ENCODE measurements at regions of chr19 and their contacts with region 1.

Region 1: DNA sequence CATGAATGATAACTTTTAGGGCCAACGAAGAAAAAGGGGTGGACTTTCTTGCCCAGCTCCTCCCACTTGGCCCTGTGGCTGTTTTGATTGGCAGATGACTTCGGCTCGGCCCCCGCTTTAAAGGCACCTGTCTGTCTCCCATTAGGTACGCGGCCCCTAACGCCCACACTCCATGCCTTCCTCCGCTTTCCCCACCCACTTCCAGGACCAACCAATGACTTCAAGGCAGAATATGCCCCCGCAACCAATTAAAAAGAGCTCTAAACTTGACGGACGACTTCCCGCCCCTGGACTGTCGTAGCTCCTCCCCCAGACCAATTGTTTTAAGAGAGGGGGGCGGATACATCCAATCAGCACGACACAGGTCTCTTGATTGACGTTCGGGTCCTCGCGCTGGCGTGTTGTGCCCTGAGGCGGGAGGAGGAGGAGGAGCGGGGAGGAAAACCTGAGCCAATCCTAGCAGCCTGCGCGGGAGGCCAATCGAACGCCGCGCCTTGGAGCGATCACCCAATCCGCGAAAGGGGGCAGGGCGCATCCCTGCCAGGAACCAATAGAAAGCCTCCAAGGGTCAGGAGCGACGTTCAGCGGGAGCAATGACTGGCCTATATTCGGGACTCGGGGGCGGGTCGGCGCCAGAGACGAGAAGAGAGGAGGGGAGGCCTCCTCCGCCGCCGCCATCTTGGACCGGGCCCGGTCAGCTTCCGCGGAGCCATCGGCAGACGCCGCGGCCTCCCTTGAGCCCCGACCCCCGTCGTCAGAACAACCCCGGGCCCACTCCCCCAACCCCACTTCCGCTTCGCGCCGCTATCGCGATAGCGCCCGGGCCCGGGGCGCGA is at the start of gene CNOT3:
- DNase-seq: peak; percentile 100
- H3K4me3 ChIP-seq: peak within 1 kb of the TSS; percentile 96
- H3K27ac ChIP-seq: peak within 1 kb of the TSS; percentile 54
- H3K4me1 ChIP-seq: peaks cover 21% of the 10 kb centered on the region
- CTCF ChIP-seq: no peak
- total RNA-seq, gene CNOT3: 15.2 and 18.4 TPM in 2 replicates

Region 2: DNA sequence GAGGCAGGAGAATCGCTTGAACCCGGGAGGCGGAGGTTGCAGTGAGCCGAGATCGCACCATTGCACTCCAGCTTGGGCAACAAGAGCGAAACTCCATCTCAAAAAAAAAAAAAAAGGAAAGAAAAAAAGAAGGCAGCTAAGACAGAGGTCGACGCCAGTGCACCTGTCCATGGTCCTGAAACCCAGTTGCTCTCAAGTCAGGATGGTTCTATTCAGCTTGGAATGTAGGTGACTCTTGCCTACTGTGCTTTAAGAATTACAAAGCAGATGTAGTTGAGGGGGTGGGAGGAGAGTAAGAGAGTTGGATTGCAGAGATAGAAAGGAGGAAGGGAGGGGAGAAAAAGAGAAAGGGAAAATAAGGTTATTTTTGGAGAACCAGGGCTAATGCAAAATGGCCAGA is 209.6 kb before region 1 on chr19:
- CTCF ChIA-PET with region 1: no interaction called
- POLR2A ChIA-PET with region 1: no interaction called
- intact Hi-C with region 1: no loop called
- DNase-seq: peak; percentile 29
- H3K4me3 ChIP-seq: no peak overlapping the region
- H3K27ac ChIP-seq: no peak overlapping the region
- H3K4me1 ChIP-seq: no peaks in the 10 kb centered on the region
- CTCF ChIP-seq: no peak

Region 3: DNA sequence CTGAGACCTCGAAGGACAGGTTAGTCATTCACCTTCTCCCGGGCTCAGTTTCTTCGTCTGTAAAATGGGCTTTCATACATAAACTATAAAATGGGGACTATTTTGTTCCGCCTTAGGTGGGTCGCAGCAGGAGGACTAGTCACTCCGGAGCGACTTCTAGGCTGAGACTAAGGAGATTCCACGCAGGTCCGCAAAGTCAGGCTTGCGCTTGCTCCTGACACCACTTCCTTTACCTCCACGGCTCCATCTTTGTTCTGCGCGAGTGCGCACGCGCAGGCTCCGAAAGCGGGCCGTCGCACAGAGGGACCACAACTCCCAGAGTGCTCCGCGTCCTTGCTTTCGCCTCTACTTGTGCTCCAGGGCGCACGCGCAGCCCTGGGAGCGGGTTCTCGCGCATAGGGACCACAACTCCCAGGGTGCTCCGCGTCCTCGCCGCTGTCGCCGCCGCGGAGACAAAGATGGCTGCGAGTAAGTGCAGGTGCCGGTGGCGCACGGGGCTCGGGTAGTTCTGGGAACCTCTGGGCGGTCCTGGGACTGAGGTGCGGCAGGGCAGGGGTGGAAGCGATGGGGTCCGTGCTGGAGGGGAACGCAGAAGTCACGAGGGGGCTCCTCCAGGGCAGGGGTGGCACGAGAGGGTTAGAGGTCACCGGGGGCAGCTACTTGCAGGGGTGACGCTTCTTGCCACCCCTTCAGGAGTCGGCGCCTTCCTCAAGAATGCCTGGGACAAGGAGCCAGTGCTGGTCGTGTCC is 34.7 kb before region 1 on chr19 and contains the start of gene NDUFA3:
- CTCF ChIA-PET with region 1: no interaction called
- POLR2A ChIA-PET with region 1: interaction called, 3 read pairs
- intact Hi-C with region 1: loop called (anchors 1 kb)
- DNase-seq: peak; percentile 99
- H3K4me3 ChIP-seq: peak within 1 kb of the TSS; percentile 94
- H3K27ac ChIP-seq: peak within 1 kb of the TSS; percentile 24
- H3K4me1 ChIP-seq: peaks cover 11% of the 10 kb centered on the region
- CTCF ChIP-seq: no peak
- total RNA-seq, gene NDUFA3: 32.0 and 92.4 TPM in 2 replicates

Region 4: DNA sequence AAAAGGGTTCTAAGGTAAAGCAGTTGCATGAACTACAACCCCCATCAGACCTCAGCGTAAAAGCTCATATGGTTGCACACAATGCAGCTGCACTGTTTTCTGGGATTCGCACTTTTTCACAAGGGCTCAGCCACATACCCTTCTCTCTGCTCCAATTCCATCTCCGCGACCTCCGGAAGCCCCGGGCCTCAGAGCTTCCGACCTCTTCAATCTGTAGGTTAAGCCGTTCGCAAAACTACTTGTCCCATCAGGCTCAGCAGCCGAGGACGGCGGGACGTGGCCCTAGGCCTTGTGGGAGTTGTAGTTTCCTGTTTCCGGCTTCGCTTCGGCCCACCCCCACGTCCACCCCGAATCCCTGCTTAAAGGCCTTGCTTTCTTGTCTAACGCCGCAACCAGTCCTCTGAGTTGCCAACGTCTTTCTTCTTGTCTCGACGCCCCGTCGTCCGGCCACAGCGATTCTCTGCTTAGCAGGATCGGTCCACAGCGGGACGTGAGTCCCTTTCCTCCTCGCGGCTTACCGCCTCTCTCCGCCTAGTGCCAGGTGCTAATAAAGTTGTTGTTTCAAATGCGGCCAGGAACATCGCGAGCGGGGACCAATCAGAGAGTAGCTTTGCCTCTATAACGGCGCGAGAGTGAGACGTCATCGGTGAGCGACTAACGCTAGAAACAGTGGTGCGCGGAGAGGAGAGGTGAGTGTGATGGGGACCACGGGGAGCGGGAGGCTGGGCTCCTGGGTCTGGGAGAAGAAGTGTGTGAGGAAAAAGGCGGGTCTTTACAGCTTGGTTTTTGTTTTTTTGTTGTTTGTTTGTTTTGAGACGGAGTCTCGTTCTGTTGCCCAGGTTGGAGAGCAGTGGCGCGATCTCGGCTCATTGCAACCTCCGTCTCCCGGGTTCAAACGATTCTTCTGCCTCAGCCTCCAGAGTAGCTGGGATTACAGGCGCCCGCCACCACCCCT is 21.9 kb before region 1 on chr19 and contains the starts of genes PRPF31 and TFPT:
- CTCF ChIA-PET with region 1: interaction called, 6 read pairs
- POLR2A ChIA-PET with region 1: interaction called, 7 read pairs
- intact Hi-C with region 1: loop called (anchors 1 kb)
- DNase-seq: peak; percentile 99
- H3K4me3 ChIP-seq: peak within 1 kb of the TSS; percentile 92
- H3K27ac ChIP-seq: peak within 1 kb of the TSS; percentile 66
- H3K4me1 ChIP-seq: peaks cover 16% of the 10 kb centered on the region
- CTCF ChIP-seq: no peak
- total RNA-seq, gene PRPF31: 50.9 and 53.0 TPM in 2 replicates
- total RNA-seq, gene TFPT: 17.2 and 30.1 TPM in 2 replicates

Region 5: GRCh38 chr19:54159352-54160181 is 22.3 kb after region 1 on chr19 and contains the start of gene LENG1:
- CTCF ChIA-PET with region 1: no interaction called
- POLR2A ChIA-PET with region 1: interaction called, 9 read pairs
- intact Hi-C with region 1: loop called (anchors 2 kb)
- DNase-seq: peak; percentile 100
- H3K4me3 ChIP-seq: peak within 1 kb of the TSS; percentile 81
- H3K27ac ChIP-seq: peak within 1 kb of the TSS; percentile 82
- H3K4me1 ChIP-seq: peaks cover 26% of the 10 kb centered on the region
- CTCF ChIP-seq: peak; percentile 64
- total RNA-seq, gene LENG1: 8.0 TPM in 2 replicates

Region 6: DNA sequence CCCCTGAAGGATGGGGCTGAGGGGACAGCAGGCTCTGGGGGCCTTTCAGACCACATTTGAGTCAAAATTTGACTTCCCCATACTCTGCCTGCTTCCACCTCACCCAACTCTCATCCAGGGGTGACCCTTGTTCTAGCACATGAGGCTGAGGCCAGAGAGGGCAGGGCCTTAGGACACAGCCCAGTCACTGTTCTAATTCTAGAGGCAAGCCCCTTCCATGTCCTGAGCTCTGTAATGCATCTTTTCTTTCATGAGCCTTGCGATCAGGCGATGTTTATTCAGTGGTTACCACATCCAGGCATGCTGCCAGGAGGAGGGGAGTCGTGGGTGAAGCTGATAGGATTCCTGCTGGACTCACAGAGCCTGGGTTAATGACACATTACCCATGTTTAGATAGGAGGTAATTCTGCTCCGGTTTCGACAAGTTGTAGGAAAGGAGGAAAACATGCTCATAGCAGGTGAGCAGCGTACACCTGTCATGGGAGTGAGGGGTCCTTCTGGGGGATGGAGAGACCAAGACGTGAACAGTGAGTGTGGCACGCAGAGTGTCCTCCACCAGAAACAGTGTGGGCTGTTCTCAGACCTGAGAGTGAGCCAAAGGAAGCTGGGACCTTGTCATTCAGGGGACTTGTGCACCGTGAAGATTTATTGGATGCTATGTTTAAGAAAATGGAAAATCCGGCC is 72.6 kb after region 1 on chr19:
- CTCF ChIA-PET with region 1: no interaction called
- POLR2A ChIA-PET with region 1: no interaction called
- intact Hi-C with region 1: no loop called
- DNase-seq: no peak
- H3K4me3 ChIP-seq: no peak overlapping the region
- H3K27ac ChIP-seq: no peak overlapping the region
- H3K4me1 ChIP-seq: peaks cover 30% of the 10 kb centered on the region
- CTCF ChIP-seq: no peak

Measured in OCI-LY7 (cell line).